Transverse colon (tissue), 4 donors: ENCODE measurements at regions of chr6 and their contacts with region 1.

Region 1: GRCh38 chr6:159464816-159465215 is 228.2 kb downstream of the SOD2 start:
- DNase-seq: no peak
- H3K4me3 ChIP-seq: no peak overlapping the region
- H3K27ac ChIP-seq: no peak overlapping the region
- H3K4me1 ChIP-seq: no peaks in the 10 kb centered on the region
- H3K27me3 ChIP-seq: no peaks in the 10 kb centered on the region
- CTCF ChIP-seq: no peak
- EP300 ChIP-seq: no peak
- POLR2A ChIP-seq: no peak

Region 2: GRCh38 chr6:159389695-159390094 is 75.1 kb before region 1 on chr6:
- in situ Hi-C with region 1: no loop called
- intact Hi-C with region 1: loop called (anchors 2 kb)
- DNase-seq: no peak
- H3K4me3 ChIP-seq: no peak overlapping the region
- H3K27ac ChIP-seq: no peak overlapping the region
- H3K4me1 ChIP-seq: peaks cover 0 to 6% (median 0%) of the 10 kb centered on the region in 4 donors
- H3K27me3 ChIP-seq: no peaks in the 10 kb centered on the region
- CTCF ChIP-seq: no peak
- EP300 ChIP-seq: no peak
- POLR2A ChIP-seq: no peak